Aorta (tissue), 5 donors: ENCODE measurements at regions of chr1 and their contacts with region 1.

Region 1: GRCh38 chr1:62407405-62408009 is 29.3 kb upstream of the USP1 start:
- DNase-seq: no peak
- ATAC-seq: no peak
- H3K4me3 ChIP-seq: no peak overlapping the region
- H3K27ac ChIP-seq: no peak overlapping the region
- H3K4me1 ChIP-seq: no peaks in the 10 kb centered on the region
- H3K27me3 ChIP-seq: no peaks in the 10 kb centered on the region

Region 2: GRCh38 chr1:62175568-62176179 is 231.8 kb before region 1 on chr1:
- intact Hi-C with region 1: loop called (anchors 2 to 5 kb)
- DNase-seq: no peak
- ATAC-seq: no peak
- H3K4me3 ChIP-seq: no peak overlapping the region
- H3K27ac ChIP-seq: no peak overlapping the region
- H3K4me1 ChIP-seq: no peaks in the 10 kb centered on the region
- H3K27me3 ChIP-seq: peaks cover 0 to 2% of the 10 kb centered on the region in 2 donors

Region 3: DNA sequence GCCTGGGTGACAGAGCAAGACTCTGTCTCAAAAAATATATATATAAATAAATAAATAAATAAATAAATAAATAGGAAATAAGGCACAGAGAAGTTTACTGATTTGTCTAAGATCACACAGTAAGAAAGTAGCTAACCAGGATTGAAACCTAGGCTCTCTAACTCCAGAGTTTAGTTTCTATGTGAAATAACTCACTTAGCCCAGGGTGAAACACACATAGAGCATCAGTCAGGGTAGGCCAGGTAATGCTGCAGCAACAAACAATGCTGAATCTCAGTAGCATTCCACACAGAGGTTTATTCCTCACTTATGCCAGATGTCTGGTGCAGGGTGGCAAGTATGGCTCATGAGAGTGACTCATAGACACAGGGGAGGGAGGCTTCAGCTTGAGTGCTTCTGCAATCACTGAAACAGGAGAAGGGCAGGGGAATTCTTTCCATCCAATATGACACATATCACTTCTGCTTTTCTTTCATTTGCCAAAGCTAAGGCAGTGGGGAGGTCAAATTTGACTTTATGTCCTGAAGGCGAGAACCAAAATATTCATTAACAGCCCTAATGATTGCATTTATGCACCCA is 51.2 kb before region 1 on chr1:
- intact Hi-C with region 1: no loop called
- DNase-seq: no peak
- ATAC-seq: no peak
- H3K4me3 ChIP-seq: no peak overlapping the region
- H3K27ac ChIP-seq: no peak overlapping the region
- H3K4me1 ChIP-seq: no peaks in the 10 kb centered on the region
- H3K27me3 ChIP-seq: no peaks in the 10 kb centered on the region